Breast epithelium (tissue), 4 donors: ENCODE measurements at regions of chr5 and their contacts with region 1.

Region 1: DNA sequence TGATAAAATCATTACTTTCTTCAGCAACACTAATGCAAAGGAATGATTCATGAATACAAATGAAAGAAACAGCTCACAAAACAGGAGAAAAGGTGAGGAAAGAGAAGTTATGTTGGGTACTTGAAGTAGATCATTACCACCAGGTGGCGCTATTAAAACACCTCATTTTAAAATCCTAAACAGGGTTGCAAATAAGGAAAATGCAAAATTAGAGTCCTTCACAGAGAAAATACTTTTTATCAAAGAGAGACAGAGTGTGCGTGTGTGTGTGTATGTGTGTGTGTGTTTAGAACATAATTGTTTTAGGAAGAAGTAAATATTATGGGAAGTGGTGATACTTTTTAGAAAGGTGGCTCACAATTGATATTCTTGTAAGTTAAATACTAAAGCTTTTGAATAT is 49.5 kb upstream of the CD180 start:
- DNase-seq: no peak
- H3K4me3 ChIP-seq: no peak overlapping the region
- H3K27ac ChIP-seq: peak overlapping the region; percentile 50 to 63
- H3K4me1 ChIP-seq: peaks cover 0 to 7% of the 10 kb centered on the region in 2 donors
- H3K27me3 ChIP-seq: no peaks in the 10 kb centered on the region
- CTCF ChIP-seq: peak; percentile 78 to 94 (median 90)
- POLR2A ChIP-seq: no peak

Region 2: DNA sequence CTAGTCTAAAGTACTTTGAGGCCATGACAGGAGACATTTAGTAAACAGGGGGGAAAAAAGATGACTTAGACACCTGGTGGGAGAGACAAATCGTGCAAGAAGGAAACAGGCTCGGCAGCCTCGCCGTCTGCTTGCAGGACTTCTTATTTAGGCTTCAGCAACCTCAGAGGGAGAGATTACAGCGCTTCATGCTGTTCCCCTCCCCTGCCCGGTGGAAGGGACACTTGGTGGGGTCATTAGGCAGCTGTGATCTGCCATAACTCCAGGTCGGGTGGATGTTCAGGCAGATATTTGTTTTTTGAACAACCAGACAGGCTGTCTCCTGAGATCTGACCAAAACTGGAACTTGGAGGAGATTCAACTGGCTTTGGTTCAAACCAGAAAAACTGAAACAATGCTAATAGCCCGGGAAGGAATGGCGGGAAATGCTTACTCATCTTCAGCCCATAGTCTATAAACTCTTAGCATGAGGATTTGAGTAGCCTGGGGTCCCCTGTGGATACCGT is 11.4 kb before region 1 on chr5:
- intact Hi-C with region 1: no loop called
- DNase-seq: peak in 1 of 2 donors; percentile 49
- H3K4me3 ChIP-seq: peak overlapping the region; percentile 18 to 63 (median 30)
- H3K27ac ChIP-seq: peak overlapping the region; percentile 82 to 90
- H3K4me1 ChIP-seq: peaks cover 4 to 9% of the 10 kb centered on the region in 2 donors
- H3K27me3 ChIP-seq: no peaks in the 10 kb centered on the region
- CTCF ChIP-seq: no peak
- POLR2A ChIP-seq: no peak

Region 3: GRCh38 chr5:67303356-67303755 is 57.2 kb after region 1 on chr5:
- intact Hi-C with region 1: loop called (anchors 2 kb)
- DNase-seq: no peak
- H3K4me3 ChIP-seq: no peak overlapping the region
- H3K27ac ChIP-seq: peak overlapping the region in 1 of 2 donors; percentile 2
- H3K4me1 ChIP-seq: peaks cover 0 to 7% of the 10 kb centered on the region in 2 donors
- H3K27me3 ChIP-seq: no peaks in the 10 kb centered on the region
- CTCF ChIP-seq: no peak
- POLR2A ChIP-seq: no peak

Region 4: GRCh38 chr5:68252673-68253623 is 1006.8 kb after region 1 on chr5:
- intact Hi-C with region 1: loop called (anchors 10 kb)
- DNase-seq: no peak
- H3K4me3 ChIP-seq: peak overlapping the region; percentile 14 to 16 (median 15)
- H3K27ac ChIP-seq: peak overlapping the region; percentile 81 to 86
- H3K4me1 ChIP-seq: peaks cover 11 to 27% of the 10 kb centered on the region in 2 donors
- H3K27me3 ChIP-seq: no peaks in the 10 kb centered on the region
- CTCF ChIP-seq: peak in 2 of 3 donors; percentile 62 to 70
- POLR2A ChIP-seq: no peak